CD4-positive, alpha-beta memory T cell (primary cell): ENCODE measurements at regions of chr15 and their contacts with region 1.

Region 1: GRCh38 chr15:67134067-67134838 is 68.9 kb downstream of the SMAD3 start:
- DNase-seq: peak; percentile 81 to 92 (median 85)
- H3K4me3 ChIP-seq: peak overlapping the region; percentile 48 to 73
- H3K4me3 Mint-ChIP-seq: peak overlapping the region; percentile 86 to 97 (median 90)
- H3K27ac ChIP-seq: peak overlapping the region; percentile 85
- H3K27ac Mint-ChIP-seq: peak overlapping the region; percentile 97 to 100 (median 99)
- H3K4me1 ChIP-seq: peaks cover 99% of the 10 kb centered on the region
- H3K4me1 Mint-ChIP-seq: peaks cover 75 to 98% (median 88%) of the 10 kb centered on the region in 4 donors
- H3K27me3 ChIP-seq: no peaks in the 10 kb centered on the region
- H3K27me3 Mint-ChIP-seq: no peaks in the 10 kb centered on the region

Region 2: GRCh38 chr15:67150028-67150860 is 16.0 kb after region 1 on chr15:
- CTCF ChIA-PET with region 1: interaction called, 5 read pairs
- POLR2A ChIA-PET with region 1: interaction called, 11 read pairs
- intact Hi-C with region 1: loop called (anchors 2 kb)
- DNase-seq: peak in 1 of 5 donors; percentile 68
- H3K4me3 ChIP-seq: peak overlapping the region; percentile 2 to 23
- H3K4me3 Mint-ChIP-seq: peak overlapping the region; percentile 47 to 90 (median 73)
- H3K27ac ChIP-seq: peak overlapping the region; percentile 27
- H3K27ac Mint-ChIP-seq: peak overlapping the region; percentile 43 to 95 (median 77)
- H3K4me1 ChIP-seq: peaks cover 68% of the 10 kb centered on the region
- H3K4me1 Mint-ChIP-seq: peaks cover 63 to 79% (median 72%) of the 10 kb centered on the region in 4 donors
- H3K27me3 ChIP-seq: no peaks in the 10 kb centered on the region
- H3K27me3 Mint-ChIP-seq: no peaks in the 10 kb centered on the region

Region 3: DNA sequence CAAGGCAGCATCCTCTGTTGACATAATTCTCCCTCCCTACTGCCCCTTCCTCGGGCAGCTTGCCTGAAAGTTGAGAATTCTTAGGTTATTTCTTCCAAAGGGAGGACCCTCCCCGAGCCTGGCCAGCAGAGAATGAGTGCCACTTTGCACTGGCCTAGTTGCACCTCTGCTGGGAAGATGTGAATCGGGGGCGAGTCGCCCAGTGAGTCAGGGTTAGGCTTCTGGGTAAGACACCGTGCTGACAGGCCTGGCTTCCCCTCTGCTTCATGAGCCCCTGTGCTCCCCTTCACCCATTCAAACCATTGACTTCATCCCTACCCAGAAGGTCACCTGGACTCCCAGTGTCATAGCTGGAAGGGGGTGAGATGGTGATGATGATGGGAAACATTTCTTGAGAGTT is 37.9 kb after region 1 on chr15:
- CTCF ChIA-PET with region 1: no interaction called
- POLR2A ChIA-PET with region 1: no interaction called
- intact Hi-C with region 1: no loop called
- DNase-seq: no peak
- H3K4me3 ChIP-seq: no peak overlapping the region
- H3K4me3 Mint-ChIP-seq: peak overlapping the region in 1 of 8 donors; percentile 5
- H3K27ac ChIP-seq: no peak overlapping the region
- H3K27ac Mint-ChIP-seq: peak overlapping the region in 5 of 7 donors; percentile 49 to 81 (median 69)
- H3K4me1 ChIP-seq: peaks cover 28% of the 10 kb centered on the region
- H3K4me1 Mint-ChIP-seq: peaks cover 36 to 74% (median 54%) of the 10 kb centered on the region in 4 donors
- H3K27me3 ChIP-seq: no peaks in the 10 kb centered on the region
- H3K27me3 Mint-ChIP-seq: no peaks in the 10 kb centered on the region